ENCODE measurements at regions of chr10 and their contacts with region 1.

Region 1: GRCh38 chr10:102835007-102835482 is 2.2 kb downstream of the CYP17A1 start:
- DNase-seq: peak; percentile 78 to 84
- ATAC-seq: peak; percentile 96 to 99
- H3K4me3 ChIP-seq: no peak overlapping the region
- H3K27ac ChIP-seq: no peak overlapping the region
- H3K4me1 ChIP-seq: no peaks in the 10 kb centered on the region
- CTCF ChIP-seq: peak; percentile 95
- EP300 ChIP-seq: no peak
- POLR2A ChIP-seq: no peak
- RAD21 ChIP-seq: peak; percentile 95 to 96

Region 2: DNA sequence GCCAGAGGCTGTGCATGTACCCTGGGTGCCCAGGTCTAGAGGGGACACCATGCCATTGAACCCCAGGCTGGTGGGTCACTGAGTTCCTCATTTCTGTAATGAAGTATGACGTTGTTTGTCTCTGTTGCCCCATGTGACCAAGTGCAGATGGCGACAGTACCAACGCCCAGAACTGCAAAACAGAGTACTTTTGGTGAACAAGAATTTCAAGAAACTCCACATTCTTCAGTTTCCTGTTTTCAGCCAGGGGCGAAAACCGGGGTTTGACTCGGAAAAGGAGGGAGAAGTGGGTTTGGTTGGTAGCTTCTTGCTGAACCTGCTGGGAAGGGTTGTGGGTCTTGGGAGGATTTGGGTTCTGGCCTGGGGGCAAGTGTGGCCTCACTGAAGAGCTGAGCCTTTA is 16.0 kb before region 1 on chr10:
- CTCF ChIA-PET with region 1: interaction called, 58 read pairs
- POLR2A ChIA-PET with region 1: no interaction called
- DNase-seq: no peak
- ATAC-seq: no peak
- H3K4me3 ChIP-seq: no peak overlapping the region
- H3K27ac ChIP-seq: no peak overlapping the region
- H3K4me1 ChIP-seq: no peaks in the 10 kb centered on the region
- CTCF ChIP-seq: no peak
- EP300 ChIP-seq: no peak
- POLR2A ChIP-seq: no peak
- RAD21 ChIP-seq: no peak

Region 3: GRCh38 chr10:102869258-102870198 is 34.5 kb after region 1 on chr10 and contains the start of gene AS3MT:
- CTCF ChIA-PET with region 1: interaction called, 12 read pairs
- POLR2A ChIA-PET with region 1: no interaction called
- DNase-seq: peak; percentile 23 to 52
- ATAC-seq: peak; percentile 96 to 97
- H3K4me3 ChIP-seq: peak within 1 kb of the TSS; percentile 55
- H3K27ac ChIP-seq: peak within 1 kb of the TSS; percentile 77 to 88
- H3K4me1 ChIP-seq: 0 out of 3 replicates have a peak, but pooled peaks cover 4% of the 10 kb centered on the region
- CTCF ChIP-seq: no peak
- EP300 ChIP-seq: no peak
- POLR2A ChIP-seq: no peak
- RAD21 ChIP-seq: no peak
- polyA plus RNA-seq, gene AS3MT: 8.6 and 10.8 TPM in 2 replicates

Region 4: DNA sequence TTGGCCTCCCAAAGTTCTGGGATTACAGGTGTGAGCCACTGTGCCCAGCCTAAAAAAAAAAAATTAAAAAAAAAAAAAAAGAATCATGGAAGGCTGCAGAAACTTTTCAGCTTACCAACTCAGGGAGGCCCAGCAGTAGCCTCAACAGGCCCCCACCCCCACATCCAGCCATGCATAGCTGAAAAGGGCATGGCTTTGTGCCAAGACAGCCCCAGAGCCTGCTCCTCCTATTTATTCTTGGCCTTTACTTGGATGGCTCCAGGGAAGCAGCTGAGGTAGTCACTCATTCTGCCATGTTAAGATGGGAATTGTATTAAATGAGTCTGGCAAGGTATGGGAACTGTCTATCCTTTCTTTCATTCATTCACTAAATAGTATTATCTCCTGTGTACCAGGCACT is 69.3 kb after region 1 on chr10:
- CTCF ChIA-PET with region 1: interaction called, 242 read pairs
- POLR2A ChIA-PET with region 1: no interaction called
- DNase-seq: no peak
- ATAC-seq: no peak
- H3K4me3 ChIP-seq: no peak overlapping the region
- H3K27ac ChIP-seq: no peak overlapping the region
- H3K4me1 ChIP-seq: no peaks in the 10 kb centered on the region
- CTCF ChIP-seq: no peak
- EP300 ChIP-seq: no peak
- POLR2A ChIP-seq: no peak
- RAD21 ChIP-seq: no peak

Region 5: GRCh38 chr10:103062604-103063590 is 227.9 kb after region 1 on chr10:
- CTCF ChIA-PET with region 1: interaction called, 10 read pairs
- POLR2A ChIA-PET with region 1: no interaction called
- DNase-seq: peak in 1 of 2 experiments; percentile 54
- ATAC-seq: peak; percentile 84 to 89
- H3K4me3 ChIP-seq: no peak overlapping the region
- H3K27ac ChIP-seq: no peak overlapping the region
- H3K4me1 ChIP-seq: no peaks in the 10 kb centered on the region
- CTCF ChIP-seq: peak; percentile 35
- EP300 ChIP-seq: no peak
- POLR2A ChIP-seq: no peak
- RAD21 ChIP-seq: peak; percentile 53 to 66

Region 6: DNA sequence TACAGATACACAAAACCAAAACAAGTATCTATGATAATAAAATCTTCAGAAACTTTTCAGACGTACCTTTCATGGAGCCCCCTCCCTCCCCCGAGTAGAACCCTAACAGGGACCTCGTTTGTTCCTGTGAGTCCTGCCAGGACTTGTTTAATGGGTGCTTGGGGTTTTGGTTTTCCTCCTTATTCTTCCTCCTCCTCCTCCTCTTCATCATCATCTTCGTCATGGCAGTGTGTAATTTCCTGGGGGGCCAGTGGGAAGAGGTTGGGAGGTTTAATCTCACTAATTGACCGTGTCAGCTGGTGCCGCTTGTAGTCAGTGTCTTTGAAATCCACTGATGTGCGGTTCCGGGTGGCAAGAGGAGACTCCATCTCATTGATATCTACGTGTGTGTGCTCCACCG is 254.4 kb after region 1 on chr10:
- CTCF ChIA-PET with region 1: no interaction called
- POLR2A ChIA-PET with region 1: no interaction called
- DNase-seq: no peak
- ATAC-seq: no peak
- H3K4me3 ChIP-seq: no peak overlapping the region
- H3K27ac ChIP-seq: no peak overlapping the region
- H3K4me1 ChIP-seq: no peaks in the 10 kb centered on the region
- CTCF ChIP-seq: no peak
- EP300 ChIP-seq: no peak
- POLR2A ChIP-seq: no peak
- RAD21 ChIP-seq: no peak

Measured in A549 (cell line).